ENCODE measurements at regions of chr11 and their contacts with region 1.

Region 1: GRCh38 chr11:43680521-43681400 is at the start of gene HSD17B12:
- DNase-seq: peak; percentile 100
- ATAC-seq: peak; percentile 97
- H3K4me3 Mint-ChIP-seq: peak within 1 kb of the TSS; percentile 90
- H3K27ac Mint-ChIP-seq: peak within 1 kb of the TSS; percentile 97
- H3K4me1 Mint-ChIP-seq: peaks cover 31% of the 10 kb centered on the region
- H3K27me3 Mint-ChIP-seq: peaks cover 2% of the 10 kb centered on the region
- total RNA-seq, gene HSD17B12: 57.6 to 68.9 TPM

Region 2: GRCh38 chr11:43547889-43548381 is 132.8 kb before region 1 on chr11:
- CTCF ChIA-PET with region 1: no interaction called
- POLR2A ChIA-PET with region 1: no interaction called
- intact Hi-C with region 1: no loop called
- DNase-seq: peak; percentile 23
- ATAC-seq: peak; percentile 19
- H3K4me3 Mint-ChIP-seq: no peak overlapping the region
- H3K27ac Mint-ChIP-seq: no peak overlapping the region
- H3K4me1 Mint-ChIP-seq: peaks cover 2% of the 10 kb centered on the region
- H3K27me3 Mint-ChIP-seq: peaks cover 44% of the 10 kb centered on the region

Region 3: GRCh38 chr11:43579171-43579918 is 101.4 kb before region 1 on chr11:
- CTCF ChIA-PET with region 1: no interaction called
- POLR2A ChIA-PET with region 1: no interaction called
- intact Hi-C with region 1: loop called in 1 of 2 experiments (anchors 2 kb)
- DNase-seq: peak; percentile 76
- ATAC-seq: peak; percentile 65
- H3K4me3 Mint-ChIP-seq: peak overlapping the region; percentile 47
- H3K27ac Mint-ChIP-seq: no peak overlapping the region
- H3K4me1 Mint-ChIP-seq: peaks cover 43% of the 10 kb centered on the region
- H3K27me3 Mint-ChIP-seq: peaks cover 84% of the 10 kb centered on the region

Region 4: DNA sequence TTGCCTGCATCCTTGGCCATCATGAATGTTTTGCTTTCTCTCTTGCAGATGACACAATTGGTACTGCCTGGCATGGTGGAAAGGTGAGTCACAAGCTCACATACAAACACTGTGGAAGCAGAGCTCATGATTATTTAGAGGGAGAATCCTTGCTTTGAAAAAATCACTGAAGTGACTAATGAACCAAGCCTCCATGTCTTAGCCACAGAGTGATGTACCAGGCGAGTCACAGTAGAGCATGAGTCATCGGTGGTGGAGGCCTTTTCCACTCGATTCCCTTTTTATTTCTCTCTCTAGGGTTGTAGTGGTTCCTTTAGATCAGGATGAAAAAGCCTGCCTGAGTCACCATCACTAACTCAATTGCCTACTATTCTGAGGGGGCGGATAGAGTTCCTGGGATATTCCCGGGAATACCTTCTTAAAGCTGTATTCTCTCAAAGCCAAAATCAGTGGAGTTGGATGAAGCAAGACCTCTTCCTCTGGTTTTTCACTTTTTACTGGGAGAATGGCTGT is 150.2 kb after region 1 on chr11:
- CTCF ChIA-PET with region 1: interaction called, 4 read pairs
- POLR2A ChIA-PET with region 1: no interaction called
- intact Hi-C with region 1: loop called (anchors 2 kb)
- DNase-seq: peak; percentile 81
- ATAC-seq: peak; percentile 99
- H3K4me3 Mint-ChIP-seq: no peak overlapping the region
- H3K27ac Mint-ChIP-seq: peak overlapping the region; percentile 73
- H3K4me1 Mint-ChIP-seq: peaks cover 24% of the 10 kb centered on the region
- H3K27me3 Mint-ChIP-seq: no peaks in the 10 kb centered on the region

Region 5: DNA sequence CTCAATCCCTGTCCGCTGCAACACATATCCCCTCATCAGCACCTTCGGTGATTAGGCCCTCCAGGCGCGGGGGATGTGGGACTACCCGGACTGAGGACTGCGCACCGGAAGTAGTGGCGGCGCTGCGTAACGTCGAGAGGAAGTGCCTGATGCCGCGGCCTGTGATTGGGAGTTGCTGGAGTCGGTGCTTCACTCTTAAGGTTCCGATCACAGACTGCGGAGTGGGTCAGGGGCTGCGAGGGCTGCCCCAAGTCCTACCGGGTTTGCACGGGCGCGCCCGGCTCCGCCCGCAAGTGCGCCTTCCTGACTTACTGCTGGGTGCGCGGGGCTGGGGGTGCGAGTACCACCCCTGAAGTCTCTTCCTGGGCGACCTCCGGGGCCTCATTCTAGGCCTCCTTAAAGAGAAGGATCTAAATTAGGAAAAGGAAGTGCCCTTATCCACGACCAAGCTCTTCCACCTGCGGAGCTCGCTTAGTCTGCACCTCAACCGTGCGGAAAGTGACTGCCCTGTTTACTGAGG is 199.9 kb after region 1 on chr11 and contains the start of gene ALKBH3:
- CTCF ChIA-PET with region 1: interaction called, 3 read pairs
- POLR2A ChIA-PET with region 1: no interaction called
- intact Hi-C with region 1: loop called (anchors 1 kb)
- DNase-seq: peak; percentile 96
- ATAC-seq: peak; percentile 99
- H3K4me3 Mint-ChIP-seq: peak within 1 kb of the TSS; percentile 90
- H3K27ac Mint-ChIP-seq: peak within 1 kb of the TSS; percentile 84
- H3K4me1 Mint-ChIP-seq: peaks cover 23% of the 10 kb centered on the region
- H3K27me3 Mint-ChIP-seq: peaks cover 8% of the 10 kb centered on the region
- total RNA-seq, gene ALKBH3: 41.9 to 42.3 TPM

Region 6: GRCh38 chr11:44203270-44204043 is 522.7 kb after region 1 on chr11:
- CTCF ChIA-PET with region 1: no interaction called
- POLR2A ChIA-PET with region 1: no interaction called
- intact Hi-C with region 1: no loop called
- DNase-seq: no peak
- ATAC-seq: no peak
- H3K4me3 Mint-ChIP-seq: no peak overlapping the region
- H3K27ac Mint-ChIP-seq: no peak overlapping the region
- H3K4me1 Mint-ChIP-seq: no peaks in the 10 kb centered on the region
- H3K27me3 Mint-ChIP-seq: no peaks in the 10 kb centered on the region